Mammary epithelial cell (primary cell): ENCODE measurements at regions of chr11 and their contacts with region 1.

Region 1: DNA sequence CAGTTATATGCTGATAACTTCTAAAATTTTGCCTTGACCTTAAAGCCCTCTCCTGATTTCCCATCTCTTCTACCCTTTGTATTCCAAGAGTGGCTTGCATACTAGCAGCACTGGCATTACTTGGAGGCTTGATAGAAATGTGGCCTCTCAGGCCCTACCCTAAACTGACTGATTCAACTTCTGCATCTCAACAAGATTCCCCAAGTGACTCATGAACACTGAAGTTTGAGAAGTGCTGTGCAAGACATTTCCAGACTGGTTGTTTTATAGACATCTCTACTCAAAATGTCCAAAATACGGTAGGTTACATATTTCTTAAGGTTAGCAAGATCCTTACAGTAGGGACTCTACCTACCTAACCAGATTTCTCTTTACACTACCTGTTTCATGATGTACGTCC is 48.6 kb downstream of the SESN3 start:
- DNase-seq: peak; percentile 6
- H3K4me3 ChIP-seq: no peak overlapping the region
- H3K27ac ChIP-seq: no peak overlapping the region
- H3K4me1 ChIP-seq: no peaks in the 10 kb centered on the region
- H3K27me3 ChIP-seq: no peaks in the 10 kb centered on the region
- CTCF ChIP-seq: no peak

Region 2: GRCh38 chr11:95212609-95213008 is 30.2 kb after region 1 on chr11:
- CTCF ChIA-PET with region 1: no interaction called
- dilution Hi-C with region 1: no loop called
- in situ Hi-C with region 1: no loop called
- intact Hi-C with region 1: loop called (anchors 1 kb)
- DNase-seq: no peak
- H3K4me3 ChIP-seq: no peak overlapping the region
- H3K27ac ChIP-seq: no peak overlapping the region
- H3K4me1 ChIP-seq: no peaks in the 10 kb centered on the region
- H3K27me3 ChIP-seq: no peaks in the 10 kb centered on the region
- CTCF ChIP-seq: no peak